ENCODE measurements at regions of chr10 and their contacts with region 1.

Region 1: GRCh38 chr10:12710594-12711349 is 290.7 kb downstream of the CCDC3 start:
- DNase-seq: peak; percentile 71 to 83
- ATAC-seq: peak; percentile 81 to 90 (median 82)
- H3K4me3 ChIP-seq: no peak overlapping the region
- H3K4me3 Mint-ChIP-seq: peak overlapping the region; percentile 13
- H3K27ac ChIP-seq: no peak overlapping the region
- H3K27ac Mint-ChIP-seq: peak overlapping the region in 1 of 2 donors; percentile 6
- H3K4me1 ChIP-seq: peaks cover 6% of the 10 kb centered on the region
- H3K4me1 Mint-ChIP-seq: peaks cover 22% of the 10 kb centered on the region in 2 donors
- H3K27me3 ChIP-seq: no peaks in the 10 kb centered on the region
- H3K27me3 Mint-ChIP-seq: no peaks in the 10 kb centered on the region
- CTCF ChIP-seq: peak; percentile 92

Region 2: DNA sequence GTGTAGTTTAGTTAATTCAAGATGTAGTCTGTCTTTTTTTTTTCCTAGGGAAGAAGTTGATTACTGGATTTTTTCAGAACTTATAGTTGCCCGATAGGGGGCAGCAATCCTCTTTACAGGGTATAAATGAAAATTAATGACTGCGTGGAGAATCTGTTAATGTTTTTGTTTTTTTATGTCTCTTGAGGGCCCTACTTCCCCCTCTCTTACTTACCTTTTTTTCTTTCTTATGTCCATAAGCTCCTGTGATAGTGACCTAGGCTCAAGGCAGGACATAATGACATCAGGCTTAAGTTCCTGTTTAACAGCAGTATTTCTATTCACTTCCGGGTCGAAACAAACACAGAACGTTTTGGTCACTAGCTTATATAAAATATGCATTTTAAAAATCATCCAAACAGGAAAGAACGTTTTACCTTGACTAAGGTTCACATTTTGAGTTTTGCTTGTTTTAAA is 496.0 kb before region 1 on chr10:
- intact Hi-C with region 1: loop called (anchors 1 kb)
- DNase-seq: peak in 1 of 2 donors; percentile 79
- ATAC-seq: peak; percentile 60 to 79 (median 68)
- H3K4me3 ChIP-seq: peak overlapping the region; percentile 29
- H3K4me3 Mint-ChIP-seq: peak overlapping the region; percentile 79
- H3K27ac ChIP-seq: peak overlapping the region; percentile 43
- H3K27ac Mint-ChIP-seq: peak overlapping the region; percentile 85 to 88
- H3K4me1 ChIP-seq: no peaks in the 10 kb centered on the region
- H3K4me1 Mint-ChIP-seq: peaks cover 16 to 18% of the 10 kb centered on the region in 2 donors
- H3K27me3 ChIP-seq: no peaks in the 10 kb centered on the region
- H3K27me3 Mint-ChIP-seq: no peaks in the 10 kb centered on the region
- CTCF ChIP-seq: peak; percentile 88

Region 3: DNA sequence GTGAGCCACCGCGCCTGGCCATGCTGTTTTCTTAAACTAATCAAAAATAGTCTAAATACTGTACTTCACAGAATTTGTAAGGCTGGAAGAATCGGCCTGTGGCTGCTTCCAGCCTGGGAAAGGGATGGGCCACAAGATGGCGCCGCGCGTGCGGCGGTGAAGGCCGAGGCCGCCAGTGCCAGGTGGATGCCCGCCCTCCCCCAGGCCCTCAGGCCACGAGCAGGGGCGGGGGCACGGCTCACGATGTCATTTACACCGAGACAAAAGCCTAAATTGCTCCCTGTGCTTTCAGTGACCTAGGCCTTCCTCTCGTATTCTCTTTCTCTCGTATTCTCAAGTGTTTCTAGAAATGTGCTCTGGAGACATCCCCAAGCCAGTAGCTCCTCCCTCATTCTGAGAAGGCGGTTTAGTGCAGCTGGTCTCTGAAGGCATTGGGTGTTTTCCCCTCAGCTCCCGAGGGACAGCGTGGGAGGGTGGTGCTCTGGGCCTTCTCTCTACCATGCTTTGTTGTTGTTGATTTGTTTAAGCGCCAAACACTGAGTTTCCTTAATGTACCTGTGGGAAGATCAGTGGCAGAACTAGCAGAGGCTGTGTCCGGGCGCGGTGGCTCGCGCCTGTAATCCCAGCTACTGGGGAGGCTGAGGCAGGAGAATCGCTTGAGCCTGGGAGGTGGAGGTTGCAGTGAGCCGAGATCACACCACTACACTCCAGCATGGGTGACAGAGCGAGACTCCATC is 446.4 kb before region 1 on chr10:
- intact Hi-C with region 1: loop called (anchors 1 kb)
- DNase-seq: peak; percentile 51 to 82
- ATAC-seq: peak; percentile 41 to 69 (median 51)
- H3K4me3 ChIP-seq: no peak overlapping the region
- H3K4me3 Mint-ChIP-seq: peak overlapping the region; percentile 55
- H3K27ac ChIP-seq: peak overlapping the region; percentile 91
- H3K27ac Mint-ChIP-seq: peak overlapping the region in 1 of 2 donors; percentile 60
- H3K4me1 ChIP-seq: peaks cover 46% of the 10 kb centered on the region
- H3K4me1 Mint-ChIP-seq: peaks cover 25 to 30% of the 10 kb centered on the region in 2 donors
- H3K27me3 ChIP-seq: peaks cover 5% of the 10 kb centered on the region
- H3K27me3 Mint-ChIP-seq: peaks cover 18 to 25% of the 10 kb centered on the region in 2 donors
- CTCF ChIP-seq: peak; percentile 57